ENCODE measurements at regions of chr10 and their contacts with region 1.

Region 1: GRCh38 chr10:3887885-3888476 is 103.0 kb upstream of the KLF6 start:
- DNase-seq: no peak
- H3K4me3 Mint-ChIP-seq: peak overlapping the region; percentile 4
- H3K27ac Mint-ChIP-seq: peak overlapping the region; percentile 87
- H3K4me1 Mint-ChIP-seq: peaks cover 49% of the 10 kb centered on the region
- H3K27me3 Mint-ChIP-seq: no peaks in the 10 kb centered on the region

Region 2: DNA sequence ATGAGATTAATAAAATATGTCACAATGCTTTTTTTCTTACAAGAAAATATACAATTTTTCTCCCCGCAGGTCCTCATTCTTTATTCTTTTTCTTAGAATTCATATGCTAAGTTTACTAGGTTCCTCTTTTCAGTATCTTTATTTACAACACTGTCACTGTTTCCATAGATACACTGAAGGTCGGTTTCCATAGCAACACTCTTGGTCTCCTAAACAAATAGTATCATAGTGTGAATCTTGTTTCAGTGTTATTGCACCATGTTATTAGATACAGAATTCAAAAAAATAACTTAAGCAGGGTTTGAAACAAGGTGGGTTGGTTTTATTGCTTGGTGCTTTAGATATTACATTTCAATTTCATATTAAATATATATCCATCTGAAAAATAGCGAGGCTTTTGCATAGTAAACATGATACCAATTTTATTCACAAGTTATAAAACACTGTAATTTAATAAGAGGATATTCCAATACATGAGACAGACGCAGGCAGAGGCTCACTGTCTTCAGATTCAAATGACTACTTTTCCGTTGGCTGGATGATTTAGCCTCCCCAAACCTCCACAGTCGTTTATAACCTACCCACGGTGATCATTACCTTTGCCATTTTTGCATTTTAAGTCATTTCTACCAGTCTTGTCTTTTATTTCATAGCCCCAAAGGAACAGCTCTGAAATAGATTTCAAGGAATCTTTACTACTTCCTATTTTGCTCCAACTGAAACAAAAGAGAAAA is 14.1 kb before region 1 on chr10:
- intact Hi-C with region 1: loop called (anchors 2 kb)
- DNase-seq: no peak
- H3K4me3 Mint-ChIP-seq: no peak overlapping the region
- H3K27ac Mint-ChIP-seq: peak overlapping the region; percentile 84
- H3K4me1 Mint-ChIP-seq: peaks cover 55% of the 10 kb centered on the region
- H3K27me3 Mint-ChIP-seq: no peaks in the 10 kb centered on the region

Region 3: GRCh38 chr10:3980660-3981059 is 92.7 kb after region 1 on chr10:
- intact Hi-C with region 1: no loop called
- DNase-seq: no peak
- H3K4me3 Mint-ChIP-seq: no peak overlapping the region
- H3K27ac Mint-ChIP-seq: no peak overlapping the region
- H3K4me1 Mint-ChIP-seq: peaks cover 30% of the 10 kb centered on the region
- H3K27me3 Mint-ChIP-seq: no peaks in the 10 kb centered on the region

Measured in activated T-helper 2 cell treated with anti-CD3 and anti-CD28 coated beads, Interferon-gamma antibody, Interleukin-2, Interleukin-4, amounts not matched to agents 10 μg/mL and 5 μg/mL and 100 μg/mL, durations not matched to agents 14 hours and 24 hours and 36 hours (primary cell).